Cardiac septum (tissue), 1 donor: ENCODE measurements at regions of chr5 and their contacts with region 1.

Region 1: GRCh38 chr5:134758504-134759341 is at the start of gene DDX46:
- DNase-seq: peak; percentile 97
- total RNA-seq, gene DDX46: 32.6 TPM

Region 2: GRCh38 chr5:134637161-134637582 is 121.6 kb before region 1 on chr5:
- intact Hi-C with region 1: loop called (anchors 5 kb)
- DNase-seq: no peak

Region 3: GRCh38 chr5:134738133-134738962 is 20.4 kb before region 1 on chr5 and contains the start of gene CAMLG:
- intact Hi-C with region 1: loop called (anchors 1 kb)
- DNase-seq: peak; percentile 99
- total RNA-seq, gene CAMLG: 18.7 TPM

Region 4: DNA sequence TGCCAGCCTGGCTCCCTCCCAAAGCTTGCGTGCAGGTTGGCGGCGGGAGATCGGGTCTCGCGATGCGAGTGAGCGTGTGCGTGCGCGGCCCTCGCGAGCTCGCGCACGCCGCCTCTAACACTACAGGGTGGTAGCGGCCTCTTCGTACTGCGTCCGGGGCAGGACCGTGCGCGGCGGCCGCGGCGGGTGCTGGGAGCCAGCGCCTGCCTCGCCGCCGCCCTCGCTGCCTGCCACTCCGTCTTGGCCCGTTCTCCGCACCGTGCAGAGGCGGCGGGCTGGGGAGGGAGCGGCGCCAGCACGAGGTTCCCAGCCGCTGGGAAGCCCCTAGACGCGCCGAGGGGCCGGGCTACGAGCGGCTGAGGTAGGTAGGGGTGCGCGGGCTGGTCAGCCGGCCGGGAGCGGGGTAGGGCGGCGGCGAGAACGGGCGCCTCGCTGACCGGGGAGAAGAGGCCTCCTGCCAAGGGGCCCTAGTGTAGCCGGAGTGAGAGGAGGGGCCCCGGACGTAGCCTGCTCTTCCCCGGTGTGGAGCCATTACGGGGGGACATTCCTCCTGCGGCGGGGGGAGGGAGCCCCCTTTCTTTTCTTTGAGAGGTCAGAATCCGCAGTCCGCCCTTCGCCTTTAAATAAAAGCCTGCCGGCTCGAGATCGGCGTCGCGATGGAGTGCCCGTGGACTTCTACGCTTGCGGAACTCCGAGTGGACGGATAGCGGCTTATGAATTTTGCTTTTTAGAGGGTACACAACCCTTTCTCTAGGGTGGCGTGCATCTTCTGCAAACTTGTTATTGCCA is 87.3 kb after region 1 on chr5 and contains the start of gene C5orf24:
- intact Hi-C with region 1: loop called (anchors 5 kb)
- DNase-seq: peak; percentile 96
- total RNA-seq, gene C5orf24: 26.6 TPM

Region 5: DNA sequence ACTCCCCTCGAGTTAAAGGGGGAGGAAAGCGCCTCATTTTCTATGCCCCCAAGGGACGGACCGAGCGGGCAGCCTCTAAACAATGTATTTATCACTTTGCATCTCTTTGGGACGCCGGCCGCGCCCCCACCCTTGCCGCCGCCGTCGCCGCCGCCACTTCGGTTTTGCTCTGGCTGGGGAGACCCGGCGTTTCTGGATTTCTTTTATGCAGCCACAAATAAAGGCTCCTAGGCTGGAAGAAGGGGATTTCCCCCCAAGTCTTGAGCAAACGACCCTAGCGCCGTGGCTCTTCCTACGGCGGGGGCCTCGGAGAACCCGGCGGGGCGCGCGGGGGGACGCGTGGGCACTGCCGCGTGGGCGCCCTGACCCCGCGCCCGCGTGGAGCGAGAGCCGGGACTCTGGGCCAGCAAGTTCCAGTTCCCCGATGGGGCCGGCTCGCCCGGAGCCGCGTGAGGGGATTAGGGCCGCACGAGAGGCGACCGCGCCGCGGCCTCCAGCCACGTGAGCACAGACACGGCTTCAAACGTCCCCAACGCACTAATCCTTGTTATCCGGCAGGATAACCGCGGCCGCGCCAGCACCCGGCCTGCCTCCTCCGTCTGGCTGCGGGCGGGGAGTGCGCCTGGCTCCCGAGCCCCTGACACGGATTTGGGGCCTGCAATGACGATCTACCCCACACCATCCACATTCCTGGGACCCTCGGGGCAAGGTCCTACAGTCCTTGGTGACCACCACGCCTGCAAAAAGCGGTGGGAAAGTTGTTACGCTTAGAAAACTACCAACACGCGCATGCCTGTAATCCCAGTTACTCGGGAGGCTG is 785.0 kb after region 1 on chr5:
- intact Hi-C with region 1: no loop called
- DNase-seq: no peak